ENCODE measurements at regions of chr11 and their contacts with region 1.

Region 1: GRCh38 chr11:47586098-47586855 is at the start of gene FAM180B:
- DNase-seq: no peak
- ATAC-seq: peak; percentile 39
- H3K4me3 ChIP-seq: no peak within 1 kb of the TSS
- H3K27ac ChIP-seq: no peak within 1 kb of the TSS
- H3K4me1 ChIP-seq: peaks cover 0 to 14% of the 10 kb centered on the region in 2 experiments; a peak in 1 of 5 replicates
- H3K27me3 ChIP-seq: no peaks in the 10 kb centered on the region
- CTCF ChIP-seq: no peak
- EP300 ChIP-seq: no peak
- POLR2A ChIP-seq: no peak
- RAD21 ChIP-seq: no peak
- polyA plus RNA-seq, gene FAM180B: not detected

Region 2: DNA sequence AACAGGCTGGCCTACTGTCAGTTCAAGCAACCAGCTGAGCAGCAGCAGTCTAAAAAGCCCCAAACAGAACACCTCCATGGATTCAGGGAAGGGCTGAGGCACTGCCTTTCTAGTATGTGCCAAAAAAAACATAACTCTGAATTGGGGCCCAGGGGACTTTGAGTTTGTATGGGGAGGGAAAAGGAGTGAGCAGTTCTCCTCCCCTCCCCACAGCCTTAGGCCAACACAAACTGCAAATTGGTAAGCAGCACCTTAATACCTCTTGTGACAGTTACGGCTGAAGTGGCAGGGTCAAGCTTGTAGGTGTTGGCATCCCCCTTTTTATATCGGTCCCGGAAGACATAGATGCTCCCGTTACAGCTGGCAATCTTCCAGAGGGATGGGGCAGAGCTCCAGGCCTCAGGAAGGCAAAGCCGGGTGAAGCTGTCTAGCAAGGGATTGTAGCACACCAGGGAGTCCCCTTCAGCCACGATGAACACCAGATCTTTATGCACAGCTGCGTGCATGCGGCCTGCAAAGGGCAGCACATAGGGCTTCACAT is 13.5 kb before region 1 on chr11:
- CTCF ChIA-PET with region 1: no interaction called
- POLR2A ChIA-PET with region 1: interaction called, 14 read pairs
- in situ Hi-C with region 1: no loop called
- intact Hi-C with region 1: no loop called
- DNase-seq: peak in 2 of 4 experiments; percentile 13 to 15
- ATAC-seq: peak; percentile 8; the same call in 2 of the 3 replicates
- H3K4me3 ChIP-seq: no peak overlapping the region
- H3K27ac ChIP-seq: no peak overlapping the region
- H3K4me1 ChIP-seq: peaks cover 6 to 10% of the 10 kb centered on the region in 2 experiments; a peak in 4 of 5 replicates
- H3K27me3 ChIP-seq: no peaks in the 10 kb centered on the region
- CTCF ChIP-seq: no peak
- EP300 ChIP-seq: no peak
- POLR2A ChIP-seq: no peak
- RAD21 ChIP-seq: no peak